CD14-positive monocyte (primary cell): ENCODE measurements at regions of chr5 and their contacts with region 1.

Region 1: DNA sequence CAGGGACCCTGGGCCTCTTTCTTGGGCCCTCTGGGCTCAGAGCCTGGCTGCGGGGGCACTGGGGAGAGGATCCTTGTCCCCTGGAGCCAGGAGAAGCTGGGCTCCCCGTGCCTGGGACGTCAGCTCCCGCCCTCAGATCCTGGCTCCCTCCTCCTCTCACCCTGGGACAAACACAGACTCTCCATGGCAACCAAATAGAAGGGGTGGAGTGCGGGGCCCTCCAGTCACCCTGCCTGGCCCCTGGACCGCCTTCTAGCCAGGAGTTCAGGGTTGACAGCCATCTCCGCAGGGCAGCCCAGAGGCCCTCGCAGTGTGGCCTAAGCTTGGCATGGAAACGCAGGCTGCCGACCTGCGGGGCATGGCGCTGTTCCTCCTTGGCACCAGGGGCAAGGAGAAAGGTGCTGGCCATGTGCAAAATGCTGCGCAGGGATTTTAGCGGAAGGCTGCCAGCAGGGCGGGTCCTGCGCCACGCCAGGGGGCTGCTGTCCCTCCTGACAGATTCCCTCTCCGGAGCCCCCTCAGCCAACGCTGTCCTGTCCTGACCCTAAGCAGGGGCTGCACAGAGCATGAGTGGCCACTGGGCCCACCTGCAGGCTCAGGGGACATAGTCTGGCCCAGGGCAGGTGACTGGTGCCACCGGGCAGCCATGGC is 1.0 kb downstream of the ZDHHC11 start:
- DNase-seq: no peak
- H3K4me3 ChIP-seq: no peak overlapping the region
- H3K4me3 Mint-ChIP-seq: no peak overlapping the region
- H3K27ac ChIP-seq: no peak overlapping the region
- H3K27ac Mint-ChIP-seq: no peak overlapping the region
- H3K4me1 ChIP-seq: no peaks in the 10 kb centered on the region
- H3K4me1 Mint-ChIP-seq: no peaks in the 10 kb centered on the region
- H3K27me3 ChIP-seq: no peaks in the 10 kb centered on the region
- H3K27me3 Mint-ChIP-seq: peaks cover 4 to 7% (median 7%) of the 10 kb centered on the region in 3 donors
- CTCF ChIP-seq: no peak

Region 2: GRCh38 chr5:399296-400281 is 450.2 kb before region 1 on chr5:
- intact Hi-C with region 1: no loop called
- DNase-seq: peak; percentile 89 to 98 (median 93)
- H3K4me3 ChIP-seq: no peak overlapping the region
- H3K4me3 Mint-ChIP-seq: peak overlapping the region in 1 of 2 donors; percentile 85
- H3K27ac ChIP-seq: peak overlapping the region; percentile 52 to 76
- H3K27ac Mint-ChIP-seq: peak overlapping the region in 6 of 7 donors; percentile 66 to 91 (median 83)
- H3K4me1 ChIP-seq: peaks cover 19 to 29% of the 10 kb centered on the region in 2 donors
- H3K4me1 Mint-ChIP-seq: peaks cover 17% of the 10 kb centered on the region
- H3K27me3 ChIP-seq: peaks cover 0 to 12% of the 10 kb centered on the region in 2 donors
- H3K27me3 Mint-ChIP-seq: peaks cover 7 to 21% (median 20%) of the 10 kb centered on the region in 3 donors
- CTCF ChIP-seq: no peak

Region 3: DNA sequence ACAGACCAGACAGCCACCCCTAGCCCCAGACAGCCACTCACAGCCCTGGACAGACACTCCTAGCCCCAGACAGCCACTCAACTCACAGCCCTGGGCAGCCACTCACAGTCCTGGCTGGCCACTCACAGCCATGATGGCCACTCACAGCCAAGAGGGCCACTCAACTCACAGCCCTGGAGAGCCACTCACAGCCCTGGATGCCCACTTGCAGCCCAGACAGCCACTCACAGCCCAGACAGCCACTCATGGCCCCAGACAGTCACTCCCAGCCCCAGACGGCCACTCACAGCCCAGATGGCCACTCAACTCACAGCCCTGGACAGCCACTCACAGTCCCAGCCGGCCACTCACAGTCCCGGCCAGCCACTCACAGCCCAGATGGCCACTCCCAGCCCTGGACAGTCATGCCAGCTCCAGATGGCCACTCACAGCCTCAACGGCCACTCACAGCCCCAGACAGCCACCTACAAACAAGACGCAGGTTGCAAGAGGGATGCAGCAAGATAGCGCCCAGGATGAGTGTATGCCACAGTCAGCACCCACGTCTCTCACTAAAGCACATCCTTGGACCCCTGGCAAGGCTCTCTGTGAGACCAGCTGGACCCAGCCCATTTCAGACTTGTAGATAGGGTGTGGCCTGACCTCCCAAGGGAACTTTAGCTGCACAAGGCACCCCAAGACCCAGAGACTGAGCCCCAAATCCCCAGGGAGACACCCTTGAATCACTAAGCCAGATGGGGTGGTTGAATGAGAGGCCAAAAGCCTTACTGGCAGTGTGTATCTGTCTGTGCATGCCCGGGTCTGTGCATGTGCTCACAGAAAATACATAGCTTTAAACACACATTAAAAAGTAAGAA is 87.7 kb before region 1 on chr5:
- intact Hi-C with region 1: loop called in 1 of 2 experiments (anchors 5 kb)
- DNase-seq: no peak
- H3K4me3 ChIP-seq: no peak overlapping the region
- H3K4me3 Mint-ChIP-seq: no peak overlapping the region
- H3K27ac ChIP-seq: no peak overlapping the region
- H3K27ac Mint-ChIP-seq: peak overlapping the region in 1 of 7 donors; percentile 55
- H3K4me1 ChIP-seq: no peaks in the 10 kb centered on the region
- H3K4me1 Mint-ChIP-seq: no peaks in the 10 kb centered on the region
- H3K27me3 ChIP-seq: no peaks in the 10 kb centered on the region
- H3K27me3 Mint-ChIP-seq: peaks cover 0 to 16% (median 9%) of the 10 kb centered on the region in 3 donors
- CTCF ChIP-seq: no peak

Region 4: DNA sequence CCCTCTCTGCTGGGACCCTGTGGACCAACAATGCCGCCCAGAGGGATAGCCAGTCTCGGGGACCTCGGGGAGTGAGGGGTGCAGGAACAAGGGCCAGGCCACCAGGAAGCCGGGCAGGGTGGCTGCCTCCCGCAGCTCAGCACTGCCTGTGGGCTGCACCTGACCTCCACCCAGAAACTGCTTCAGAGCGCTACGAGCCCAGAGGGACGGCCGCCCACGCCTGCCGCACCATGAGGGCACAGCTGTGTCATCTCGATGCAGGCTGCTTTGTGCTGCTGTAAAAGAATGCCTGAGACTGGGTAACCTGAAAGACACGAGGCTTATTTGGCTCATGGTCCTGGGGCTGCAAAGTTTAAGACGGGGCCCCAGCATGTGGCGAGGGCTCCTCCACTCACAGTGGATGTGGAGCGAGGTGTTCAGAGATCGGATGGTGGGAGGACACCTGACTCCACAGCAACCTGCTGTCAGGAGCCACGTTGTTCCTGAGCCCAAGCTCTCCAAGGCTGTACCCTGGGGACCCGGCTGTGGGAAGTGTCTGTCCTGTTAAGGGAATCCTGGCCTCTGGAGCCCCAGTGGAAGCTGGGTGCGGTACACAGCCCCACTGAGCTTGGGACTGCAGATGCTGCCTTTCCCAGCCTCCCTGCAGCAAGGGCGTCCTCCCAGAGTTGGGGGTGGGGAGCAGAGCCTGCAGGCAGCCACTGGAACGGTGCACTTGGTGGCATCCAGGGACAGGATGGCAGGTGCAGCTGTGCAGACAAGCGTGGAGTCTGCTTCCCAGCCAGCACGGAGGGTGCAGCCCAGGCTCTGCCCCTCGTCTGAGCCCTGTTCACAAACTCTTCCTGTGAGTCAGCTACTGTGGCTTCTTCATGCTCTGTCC is 12.8 kb after region 1 on chr5:
- intact Hi-C with region 1: no loop called
- DNase-seq: no peak
- H3K4me3 ChIP-seq: no peak overlapping the region
- H3K4me3 Mint-ChIP-seq: no peak overlapping the region
- H3K27ac ChIP-seq: no peak overlapping the region
- H3K27ac Mint-ChIP-seq: no peak overlapping the region
- H3K4me1 ChIP-seq: no peaks in the 10 kb centered on the region
- H3K4me1 Mint-ChIP-seq: no peaks in the 10 kb centered on the region
- H3K27me3 ChIP-seq: no peaks in the 10 kb centered on the region
- H3K27me3 Mint-ChIP-seq: no peaks in the 10 kb centered on the region
- CTCF ChIP-seq: no peak